GM13976 (cell line): ENCODE measurements at regions of chr14 and their contacts with region 1.

Region 1: DNA sequence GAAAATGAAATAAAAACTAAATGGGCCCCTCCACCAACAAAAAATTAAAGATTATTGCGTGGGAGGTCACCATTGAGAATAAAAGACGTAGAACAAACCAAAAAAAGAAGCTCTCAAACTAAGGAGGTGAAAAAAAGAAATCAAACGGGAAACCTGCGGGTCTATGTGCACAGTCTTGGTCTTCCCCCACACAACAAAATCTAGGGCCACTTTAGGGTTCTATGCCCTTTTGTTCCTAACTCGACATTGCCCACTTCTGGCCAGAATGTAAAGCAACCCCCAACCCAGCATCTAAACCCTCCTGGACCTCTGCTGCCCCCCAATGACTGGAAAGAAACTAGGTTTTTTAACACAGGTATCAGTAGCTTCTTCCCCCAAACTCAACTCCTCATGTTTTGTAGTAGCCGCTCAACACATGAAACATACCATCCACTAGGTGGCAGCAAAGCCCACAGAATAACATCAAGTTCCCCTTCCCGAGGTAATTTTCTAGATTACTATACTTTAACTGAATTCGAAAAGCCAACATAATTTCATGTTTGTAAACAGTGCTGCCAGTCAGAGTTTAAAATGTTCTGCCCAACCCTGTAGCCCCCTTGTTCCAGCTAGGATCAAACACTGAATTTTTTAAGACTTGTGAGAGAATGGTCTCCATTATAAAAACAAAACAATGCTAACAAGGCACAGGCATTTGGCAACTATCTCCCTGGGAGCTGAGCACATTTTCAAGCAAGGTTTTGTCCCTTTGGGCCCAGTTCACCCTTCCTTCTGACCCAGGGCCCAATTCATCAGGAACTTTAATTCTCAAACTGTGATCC is 18.7 kb downstream of the DAD1 start:
- DNase-seq: peak; percentile 82
- CTCF ChIP-seq: peak; percentile 87

Region 2: DNA sequence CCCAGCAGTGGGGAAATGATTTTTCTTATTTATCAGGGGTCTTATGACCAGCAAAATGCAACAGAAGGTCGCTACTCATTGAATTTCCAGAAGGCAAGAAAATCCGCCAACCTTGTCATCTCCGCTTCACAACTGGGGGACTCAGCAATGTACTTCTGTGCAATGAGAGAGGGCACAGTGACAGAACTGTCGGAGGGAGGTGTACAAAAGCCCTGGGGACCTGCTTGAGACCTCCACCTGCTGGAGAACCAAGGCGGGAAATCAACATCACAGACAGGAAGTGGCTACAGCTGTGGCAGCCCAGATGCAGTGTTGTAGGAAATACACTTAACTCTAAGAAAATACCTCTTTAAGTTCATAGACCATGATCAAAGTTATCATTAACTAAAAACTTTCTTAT is 645.9 kb before region 1 on chr14:
- in situ Hi-C with region 1: no loop called
- DNase-seq: no peak
- CTCF ChIP-seq: no peak

Region 3: GRCh38 chr14:22778084-22778483 is 207.7 kb after region 1 on chr14:
- in situ Hi-C with region 1: loop called (anchors 10 kb)
- DNase-seq: no peak
- CTCF ChIP-seq: no peak

Region 4: GRCh38 chr14:23113431-23114119 is 543.2 kb after region 1 on chr14:
- in situ Hi-C with region 1: no loop called
- DNase-seq: no peak
- CTCF ChIP-seq: no peak